Common myeloid progenitor, CD34-positive (primary cell): ENCODE measurements at regions of chr19 and their contacts with region 1.

Region 1: DNA sequence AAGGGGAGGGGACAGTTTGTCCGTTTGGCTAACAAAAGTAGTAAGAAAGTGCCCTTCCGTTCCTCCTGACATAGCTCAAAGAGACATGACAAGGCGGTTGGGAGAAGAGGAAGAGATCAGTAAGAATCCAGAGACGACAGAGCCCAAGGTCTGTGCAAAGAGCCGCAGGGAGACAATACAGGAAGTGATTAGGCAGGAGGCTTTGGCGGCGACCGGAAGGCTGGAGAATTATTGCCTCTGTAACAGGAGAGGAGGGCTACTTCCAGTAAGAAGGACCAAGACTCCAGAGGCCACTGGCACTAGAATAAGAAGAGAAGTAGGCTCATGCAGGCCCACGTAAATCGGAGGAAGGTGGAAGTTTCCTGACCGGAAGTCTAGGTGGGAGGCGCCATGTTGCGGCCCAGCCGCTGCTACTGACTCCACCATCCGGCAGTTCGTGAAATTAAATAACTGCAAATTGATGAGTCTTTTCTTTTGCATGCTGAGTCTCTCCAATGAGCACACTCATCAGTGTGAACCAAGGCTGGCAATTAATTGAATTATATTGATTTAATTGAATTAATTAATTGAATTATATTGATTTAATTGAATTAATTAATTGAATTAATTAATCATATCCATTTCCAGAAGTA is 9.9 kb downstream of the RFX2 start:
- DNase-seq: peak; percentile 56 to 77 (median 74)
- H3K4me3 ChIP-seq: peak overlapping the region; percentile 6 to 73 (median 58)
- H3K27ac ChIP-seq: peak overlapping the region in 1 of 2 experiments; percentile 78
- H3K4me1 ChIP-seq: peaks cover 18 to 74% (median 37%) of the 10 kb centered on the region in 4 experiments
- H3K27me3 ChIP-seq: no peaks in the 10 kb centered on the region

Region 2: DNA sequence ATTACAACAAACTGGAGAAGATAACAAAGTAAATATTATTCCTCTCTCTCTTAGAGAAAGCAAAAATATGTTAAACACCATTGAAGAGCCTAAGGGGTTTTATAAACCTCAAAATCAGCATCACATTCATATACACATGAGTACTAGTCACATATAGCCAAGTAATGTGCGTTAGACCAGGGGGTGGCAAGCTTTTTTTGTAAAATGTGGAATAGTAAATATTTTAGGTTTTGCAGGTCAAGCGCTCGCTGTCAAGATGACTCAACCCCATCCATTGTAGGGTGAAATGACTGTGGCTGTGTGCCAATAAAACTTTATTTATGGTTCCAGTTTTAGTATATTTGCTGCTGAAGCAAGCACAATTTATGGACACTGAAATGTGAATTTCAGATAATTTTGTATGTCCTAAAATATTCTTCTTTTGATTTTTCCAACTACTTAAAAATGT is 11.8 kb before region 1 on chr19:
- CTCF ChIA-PET with region 1: interaction called, 13 read pairs
- POLR2A ChIA-PET with region 1: no interaction called
- DNase-seq: no peak
- H3K4me3 ChIP-seq: no peak overlapping the region
- H3K27ac ChIP-seq: peak overlapping the region in 1 of 2 experiments; percentile 70
- H3K4me1 ChIP-seq: peaks cover 8 to 50% (median 27%) of the 10 kb centered on the region in 4 experiments
- H3K27me3 ChIP-seq: peaks cover 0 to 5% (median 0%) of the 10 kb centered on the region in 5 experiments